Right cardiac atrium (tissue), 5 donors: ENCODE measurements at regions of chr1 and their contacts with region 1.

Region 1: GRCh38 chr1:54810100-54810942 is 9.2 kb upstream of the TTC22 start:
- DNase-seq: peak; percentile 61 to 81 (median 80)
- ATAC-seq: peak; percentile 86
- H3K4me3 ChIP-seq: no peak overlapping the region
- H3K27ac ChIP-seq: no peak overlapping the region
- H3K4me1 ChIP-seq: no peaks in the 10 kb centered on the region
- H3K27me3 ChIP-seq: no peaks in the 10 kb centered on the region

Region 2: GRCh38 chr1:54070171-54070837 is 740.0 kb before region 1 on chr1:
- intact Hi-C with region 1: loop called in 2 of 4 experiments (anchors 5 to 10 kb)
- DNase-seq: no peak
- ATAC-seq: peak in 1 of 2 donors; percentile 49
- H3K4me3 ChIP-seq: no peak overlapping the region
- H3K27ac ChIP-seq: no peak overlapping the region
- H3K4me1 ChIP-seq: no peaks in the 10 kb centered on the region
- H3K27me3 ChIP-seq: no peaks in the 10 kb centered on the region

Region 3: DNA sequence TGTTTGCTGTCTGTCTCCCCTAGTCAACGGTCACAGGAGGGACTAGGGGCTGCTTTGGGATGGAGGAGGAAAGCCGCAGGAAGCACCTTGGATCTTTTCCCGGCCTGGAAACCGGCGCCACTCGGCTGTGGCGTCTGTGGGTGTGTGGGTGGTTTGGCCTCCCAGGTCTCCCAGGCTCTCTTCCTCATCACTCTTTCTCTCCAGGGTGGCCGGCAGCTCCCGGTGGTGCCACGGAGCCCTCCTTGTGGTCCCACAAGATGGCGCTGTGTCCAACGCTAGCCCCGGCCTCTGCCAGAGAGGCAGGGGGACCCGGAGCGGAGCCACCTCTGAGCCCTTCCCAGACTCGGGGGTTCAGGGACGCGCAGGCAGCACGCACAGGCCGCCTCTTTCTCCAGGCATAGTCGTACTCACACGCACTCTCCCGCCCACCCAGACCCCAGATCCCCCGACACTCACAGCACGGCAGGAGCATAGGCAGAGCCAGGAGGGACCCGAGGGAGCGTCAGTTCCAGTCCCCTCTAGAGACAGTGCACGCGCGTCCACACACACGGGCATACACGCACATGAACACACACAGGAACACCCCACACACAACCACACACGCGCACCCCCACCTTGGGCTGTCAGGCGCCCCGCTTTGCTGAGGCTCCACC is 688.7 kb before region 1 on chr1:
- intact Hi-C with region 1: loop called in 1 of 4 experiments (anchors 10 kb)
- DNase-seq: peak; percentile 84 to 91 (median 90)
- ATAC-seq: peak; percentile 90 to 91
- H3K4me3 ChIP-seq: peak overlapping the region; percentile 13
- H3K27ac ChIP-seq: no peak overlapping the region
- H3K4me1 ChIP-seq: no peaks in the 10 kb centered on the region
- H3K27me3 ChIP-seq: no peaks in the 10 kb centered on the region